Heart left ventricle (tissue), 16 donors: ENCODE measurements at regions of chr20 and their contacts with region 1.

Region 1: GRCh38 chr20:58980700-58981627 is at the start of gene NELFCD:
- DNase-seq: peak; percentile 89 to 95 (median 91)
- ATAC-seq: peak; percentile 83 to 96 (median 94)
- H3K4me3 ChIP-seq: peak within 1 kb of the TSS; percentile 64 to 96 (median 78)
- H3K27ac ChIP-seq: peak within 1 kb of the TSS; percentile 53 to 93 (median 84)
- H3K4me1 ChIP-seq: peaks cover 0 to 44% (median 29%) of the 10 kb centered on the region in 12 donors
- H3K27me3 ChIP-seq: no peaks in the 10 kb centered on the region
- CTCF ChIP-seq: no peak
- POLR2A ChIP-seq: peak in 1 of 2 donors; percentile 88
- total RNA-seq, gene NELFCD: 21.7 to 43.8 (median 27.7) TPM

Region 2: DNA sequence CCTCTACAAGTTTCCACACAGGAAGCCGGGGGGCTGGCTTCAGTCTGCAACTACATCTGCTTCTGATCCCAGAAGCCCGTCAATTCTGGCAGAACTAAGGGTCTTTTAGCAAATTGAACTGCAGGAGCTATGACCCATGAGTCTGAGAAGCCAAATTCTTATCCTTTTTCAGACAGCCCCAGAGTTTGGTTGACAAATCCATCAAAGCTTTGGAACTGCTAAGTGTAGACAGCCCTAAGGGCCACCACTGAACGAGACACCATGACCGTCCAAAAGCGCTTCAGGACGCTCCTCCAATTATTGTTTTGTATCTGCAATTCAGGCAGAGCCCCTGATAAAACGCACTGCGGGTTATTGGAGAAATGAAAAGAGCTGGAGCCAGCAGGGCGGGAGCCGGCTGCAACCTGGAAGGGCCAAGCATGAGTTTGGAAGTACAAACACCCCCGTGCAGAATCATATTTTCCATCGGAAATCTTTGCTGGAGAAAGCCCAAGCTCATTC is 197.4 kb before region 1 on chr20:
- intact Hi-C with region 1: no loop called
- DNase-seq: no peak
- ATAC-seq: peak in 1 of 4 donors; percentile 40
- H3K4me3 ChIP-seq: no peak overlapping the region
- H3K27ac ChIP-seq: no peak overlapping the region
- H3K4me1 ChIP-seq: peaks cover 0 to 6% (median 0%) of the 10 kb centered on the region in 12 donors
- H3K27me3 ChIP-seq: peaks cover 0 to 50% (median 0%) of the 10 kb centered on the region in 9 donors
- CTCF ChIP-seq: no peak
- POLR2A ChIP-seq: no peak

Region 3: DNA sequence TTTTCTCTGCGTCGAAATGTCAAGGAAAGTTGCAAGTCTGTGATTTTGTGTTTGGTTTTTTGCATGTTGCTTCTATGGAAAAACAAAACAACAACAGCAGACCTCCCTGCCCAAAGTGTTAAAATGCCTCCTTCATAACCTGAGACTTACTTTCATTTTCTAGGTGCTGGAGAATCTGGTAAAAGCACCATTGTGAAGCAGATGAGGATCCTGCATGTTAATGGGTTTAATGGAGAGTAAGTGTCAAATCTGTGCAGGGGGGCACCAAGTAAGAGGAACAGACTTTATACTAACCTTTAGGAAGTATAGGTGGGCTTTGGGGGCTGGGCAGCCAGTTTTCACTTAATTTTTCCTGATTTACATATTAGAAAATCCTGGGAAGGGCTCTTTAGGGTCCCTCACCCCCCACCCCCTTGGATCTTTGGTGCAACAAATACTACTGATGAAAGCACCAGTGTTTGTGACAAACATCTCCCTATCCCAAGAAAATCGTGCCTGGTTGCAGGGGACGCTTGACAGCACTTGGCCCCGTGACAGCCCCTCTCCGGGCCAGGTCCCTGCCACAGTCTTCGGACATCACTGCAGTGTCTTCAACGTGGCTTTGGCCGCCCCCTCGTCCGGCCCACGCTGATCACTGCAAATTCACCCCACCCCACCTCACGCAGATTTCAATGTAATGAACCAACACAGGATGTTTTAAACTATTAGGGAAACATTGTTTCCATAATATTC is 85.3 kb before region 1 on chr20:
- intact Hi-C with region 1: loop called in 6 of 10 experiments (anchors 1 to 5 kb)
- DNase-seq: no peak
- ATAC-seq: no peak
- H3K4me3 ChIP-seq: peak overlapping the region in 9 of 12 donors; percentile 3 to 91 (median 25)
- H3K27ac ChIP-seq: peak overlapping the region in 7 of 12 donors; percentile 8 to 99 (median 13)
- H3K4me1 ChIP-seq: peaks cover 17 to 78% (median 72%) of the 10 kb centered on the region in 12 donors
- H3K27me3 ChIP-seq: no peaks in the 10 kb centered on the region
- CTCF ChIP-seq: no peak
- POLR2A ChIP-seq: no peak

Region 4: DNA sequence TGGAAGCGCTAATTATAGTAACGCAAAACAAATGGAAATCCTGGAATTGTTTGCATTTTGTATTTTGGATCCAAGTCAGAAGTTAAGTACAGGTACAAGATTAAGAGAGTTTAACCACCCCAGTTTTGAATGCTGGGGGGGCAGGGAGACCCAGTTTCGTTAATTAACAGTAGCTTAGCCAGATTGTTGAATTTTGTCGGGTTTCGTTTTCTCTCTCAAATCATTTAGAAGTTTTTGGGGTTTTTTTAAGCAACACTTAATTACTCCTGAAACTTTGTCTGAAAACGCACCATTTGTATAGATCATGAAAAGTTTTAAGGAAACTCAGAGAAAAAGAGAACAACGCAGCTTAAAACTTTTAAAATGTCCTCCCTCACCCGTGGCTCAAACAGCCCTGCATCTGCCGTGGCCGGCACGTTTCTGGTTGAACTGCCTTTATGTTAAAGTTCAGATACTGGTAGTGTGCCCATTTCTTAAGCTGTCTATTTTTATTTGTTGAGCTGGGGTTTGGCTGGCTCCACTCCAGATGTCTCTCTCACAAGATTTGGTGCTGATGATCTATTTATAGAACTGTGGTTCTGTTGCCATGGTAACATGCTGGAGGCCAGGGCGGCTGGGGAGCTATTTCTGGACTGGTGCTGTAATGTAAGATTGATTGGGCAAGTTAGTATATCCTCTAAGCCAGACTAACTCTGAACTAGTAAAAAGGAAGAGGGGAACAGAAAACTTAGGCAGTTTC is 73.4 kb before region 1 on chr20:
- intact Hi-C with region 1: loop called in 5 of 10 experiments (anchors 5 kb)
- DNase-seq: peak; percentile 86 to 94 (median 94)
- ATAC-seq: peak; percentile 91 to 98 (median 94)
- H3K4me3 ChIP-seq: peak overlapping the region in 9 of 12 donors; percentile 5 to 46 (median 30)
- H3K27ac ChIP-seq: peak overlapping the region; percentile 64 to 93 (median 84)
- H3K4me1 ChIP-seq: peaks cover 0 to 73% (median 50%) of the 10 kb centered on the region in 12 donors
- H3K27me3 ChIP-seq: no peaks in the 10 kb centered on the region
- CTCF ChIP-seq: no peak
- POLR2A ChIP-seq: no peak

Region 5: DNA sequence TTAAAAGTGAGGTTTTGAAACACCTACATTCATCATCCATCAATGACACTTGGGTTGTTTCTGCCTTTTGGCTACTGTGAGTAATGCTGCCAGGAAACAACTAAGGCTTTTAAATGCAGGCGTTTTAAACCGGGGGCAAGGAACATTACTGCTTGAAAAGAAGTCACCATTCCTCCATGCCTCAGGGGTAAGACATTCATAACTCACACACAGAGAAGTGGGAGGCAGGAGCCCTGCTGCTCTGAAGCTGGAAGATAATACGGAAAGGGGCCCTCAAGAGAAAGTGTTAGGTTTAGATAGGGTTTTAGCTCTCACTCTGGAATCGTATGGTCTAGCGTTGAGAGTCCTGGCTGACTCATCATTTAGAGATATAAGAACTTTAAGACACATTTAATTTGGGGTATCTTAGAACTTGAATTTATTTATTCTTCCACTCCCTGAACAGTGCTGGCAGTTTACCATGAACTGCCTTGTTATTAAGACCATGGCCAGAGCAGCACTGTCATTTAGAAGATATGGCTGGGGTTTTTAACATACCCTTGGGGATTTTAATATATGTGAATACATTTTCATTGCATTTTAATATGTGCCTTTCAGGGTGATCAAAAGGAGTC is 40.1 kb after region 1 on chr20:
- intact Hi-C with region 1: no loop called
- DNase-seq: no peak
- ATAC-seq: no peak
- H3K4me3 ChIP-seq: no peak overlapping the region
- H3K27ac ChIP-seq: no peak overlapping the region
- H3K4me1 ChIP-seq: peaks cover 0 to 25% (median 12%) of the 10 kb centered on the region in 12 donors
- H3K27me3 ChIP-seq: no peaks in the 10 kb centered on the region
- CTCF ChIP-seq: no peak
- POLR2A ChIP-seq: no peak

Region 6: GRCh38 chr20:59032023-59032712 is 51.2 kb after region 1 on chr20 and contains the start of gene ATP5F1E:
- intact Hi-C with region 1: loop called in 5 of 10 experiments (anchors 5 to 10 kb)
- DNase-seq: peak; percentile 97 to 98 (median 98)
- ATAC-seq: peak; percentile 99 to 100 (median 100)
- H3K4me3 ChIP-seq: peak within 1 kb of the TSS; percentile 59 to 94 (median 83)
- H3K27ac ChIP-seq: peak within 1 kb of the TSS; percentile 83 to 98 (median 92)
- H3K4me1 ChIP-seq: peaks cover 0 to 52% (median 48%) of the 10 kb centered on the region in 12 donors
- H3K27me3 ChIP-seq: no peaks in the 10 kb centered on the region
- CTCF ChIP-seq: peak in 1 of 12 donors; percentile 3
- POLR2A ChIP-seq: peak; percentile 86 to 97
- total RNA-seq, gene ATP5F1E: 38.5 to 153 (median 116) TPM